A673 (cell line): ENCODE measurements at regions of chr1 and their contacts with region 1.

Region 1: GRCh38 chr1:36446271-36446670 is 4.0 kb downstream of the OSCP1 start:
- DNase-seq: peak; percentile 65
- H3K4me3 ChIP-seq: no peak overlapping the region
- H3K27ac ChIP-seq: no peak overlapping the region
- H3K4me1 ChIP-seq: peaks cover 12% of the 10 kb centered on the region
- H3K27me3 ChIP-seq: no peaks in the 10 kb centered on the region
- CTCF ChIP-seq: peak; percentile 70

Region 2: DNA sequence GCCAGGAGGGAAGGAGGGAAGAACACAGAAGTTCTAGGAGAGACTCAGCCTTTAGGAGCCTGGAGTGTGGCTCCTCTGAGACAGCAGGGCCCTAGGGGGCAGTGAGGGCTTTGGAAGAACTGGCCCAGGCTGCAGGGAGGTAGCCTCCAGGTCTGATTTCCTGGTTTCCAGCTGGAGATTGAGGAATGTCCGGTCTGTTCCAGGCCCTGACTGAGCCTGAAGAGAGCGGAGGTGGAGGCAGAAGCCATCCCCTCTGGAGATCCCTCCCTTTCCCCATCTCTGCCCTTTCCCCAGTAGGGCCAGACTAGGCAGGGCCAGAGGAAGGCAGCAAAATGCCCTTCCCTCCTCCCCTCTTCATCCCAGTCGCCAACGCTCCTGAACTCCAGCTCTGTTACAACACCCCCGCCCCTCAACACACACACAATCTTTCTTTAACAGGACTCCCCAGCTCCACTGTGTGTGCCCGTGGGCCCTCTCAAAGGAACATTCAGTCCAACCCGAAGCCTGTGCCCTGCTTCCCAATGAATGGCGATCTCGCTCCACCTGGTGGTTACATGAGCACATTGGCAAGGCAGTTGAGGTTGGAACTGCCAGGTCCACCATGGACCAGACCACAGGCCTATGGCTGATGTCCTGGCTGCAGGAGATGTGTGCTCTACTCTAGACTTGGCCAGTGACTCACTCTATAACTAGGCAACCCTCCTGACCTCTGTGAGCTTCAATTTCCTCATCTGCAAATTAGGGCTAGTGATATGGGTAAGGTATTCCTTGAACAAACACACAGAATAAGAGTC is 258.3 kb before region 1 on chr1:
- CTCF ChIA-PET with region 1: no interaction called
- POLR2A ChIA-PET with region 1: no interaction called
- intact Hi-C with region 1: no loop called
- DNase-seq: peak; percentile 91
- H3K4me3 ChIP-seq: no peak overlapping the region
- H3K27ac ChIP-seq: no peak overlapping the region
- H3K4me1 ChIP-seq: no peaks in the 10 kb centered on the region
- H3K27me3 ChIP-seq: no peaks in the 10 kb centered on the region
- CTCF ChIP-seq: peak; percentile 91

Region 3: DNA sequence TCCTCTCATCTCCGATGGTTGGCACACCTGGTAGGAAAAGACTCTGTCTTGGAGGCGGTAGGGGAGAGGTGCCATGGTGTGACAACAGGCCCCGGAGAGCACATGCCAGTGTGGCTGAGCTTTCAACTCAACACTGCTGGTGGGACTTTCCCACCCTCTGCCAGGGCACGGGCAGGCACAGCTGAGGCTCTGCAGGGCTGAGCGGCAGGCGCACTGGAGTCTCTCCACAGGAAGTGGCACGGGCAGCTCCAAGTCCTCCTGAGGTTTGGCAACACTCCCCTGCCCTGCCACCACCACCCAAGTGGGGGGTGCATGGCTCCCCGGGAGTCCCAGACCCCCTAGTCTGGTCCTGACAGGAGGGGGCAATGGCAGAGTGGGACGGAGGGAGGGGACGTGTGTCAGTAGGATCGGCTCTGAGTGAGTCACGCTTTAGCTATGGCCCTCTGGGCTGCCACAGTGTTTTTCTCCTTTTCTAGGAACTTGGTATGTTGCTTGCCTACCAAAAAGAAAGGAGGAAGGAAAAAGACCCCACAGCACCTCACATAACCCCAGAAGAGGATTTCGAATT is 95.5 kb before region 1 on chr1:
- CTCF ChIA-PET with region 1: no interaction called
- POLR2A ChIA-PET with region 1: no interaction called
- intact Hi-C with region 1: no loop called
- DNase-seq: peak; percentile 49
- H3K4me3 ChIP-seq: no peak overlapping the region
- H3K27ac ChIP-seq: peak overlapping the region; percentile 66
- H3K4me1 ChIP-seq: peaks cover 19% of the 10 kb centered on the region
- H3K27me3 ChIP-seq: no peaks in the 10 kb centered on the region
- CTCF ChIP-seq: no peak

Region 4: GRCh38 chr1:36369061-36369861 is 77.0 kb before region 1 on chr1:
- CTCF ChIA-PET with region 1: no interaction called
- POLR2A ChIA-PET with region 1: interaction called, 10 read pairs
- intact Hi-C with region 1: no loop called
- DNase-seq: peak; percentile 86
- H3K4me3 ChIP-seq: no peak overlapping the region
- H3K27ac ChIP-seq: peak overlapping the region; percentile 51
- H3K4me1 ChIP-seq: peaks cover 53% of the 10 kb centered on the region
- H3K27me3 ChIP-seq: no peaks in the 10 kb centered on the region
- CTCF ChIP-seq: peak; percentile 91

Region 5: DNA sequence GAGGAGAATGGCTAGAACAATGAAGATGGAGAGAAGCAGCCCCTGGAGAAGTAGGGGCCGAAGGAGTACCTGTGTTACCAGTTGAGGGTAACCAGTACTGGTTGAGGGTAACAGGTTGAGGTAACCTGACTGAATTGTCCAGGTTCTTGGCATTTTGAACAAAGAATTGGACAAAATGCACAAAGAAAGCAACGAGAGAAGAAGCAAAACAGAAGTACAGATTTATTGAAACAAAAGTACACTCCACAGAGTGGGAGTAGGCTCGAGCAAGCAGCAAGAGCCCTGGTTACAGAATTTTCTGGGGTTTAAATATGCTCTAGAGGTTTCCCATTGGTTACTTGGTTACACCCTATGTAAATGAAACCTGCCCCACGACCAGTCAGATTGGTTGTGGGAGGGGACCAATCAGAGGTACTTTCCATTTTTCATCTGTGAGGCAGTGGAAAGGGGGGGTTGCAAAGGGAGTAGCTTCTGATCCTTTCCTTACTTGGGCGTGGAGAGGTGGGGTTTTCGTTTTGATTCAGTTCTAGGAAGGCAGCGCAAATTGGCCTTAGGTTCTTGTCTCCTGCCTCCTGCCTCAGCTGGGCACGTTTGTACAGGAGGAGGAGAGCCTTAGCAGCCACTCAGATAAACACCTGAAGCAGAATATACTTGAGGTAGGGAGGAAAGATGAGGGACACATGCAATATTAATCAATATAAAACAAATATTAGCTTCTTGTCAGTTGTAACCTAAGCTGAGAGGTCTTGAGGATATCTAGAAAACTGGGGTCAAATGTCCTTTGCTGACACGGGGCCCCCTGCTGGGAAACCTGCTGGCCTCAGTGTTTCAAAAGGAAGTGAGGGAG is 34.4 kb before region 1 on chr1:
- CTCF ChIA-PET with region 1: no interaction called
- POLR2A ChIA-PET with region 1: interaction called, 15 read pairs
- intact Hi-C with region 1: no loop called
- DNase-seq: peak; percentile 66
- H3K4me3 ChIP-seq: no peak overlapping the region
- H3K27ac ChIP-seq: no peak overlapping the region
- H3K4me1 ChIP-seq: no peaks in the 10 kb centered on the region
- H3K27me3 ChIP-seq: no peaks in the 10 kb centered on the region
- CTCF ChIP-seq: no peak

Region 6: GRCh38 chr1:36542962-36543515 is 96.8 kb after region 1 on chr1:
- CTCF ChIA-PET with region 1: no interaction called
- POLR2A ChIA-PET with region 1: no interaction called
- intact Hi-C with region 1: no loop called
- DNase-seq: peak; percentile 42
- H3K4me3 ChIP-seq: no peak overlapping the region
- H3K27ac ChIP-seq: no peak overlapping the region
- H3K4me1 ChIP-seq: no peaks in the 10 kb centered on the region
- H3K27me3 ChIP-seq: peaks cover 12% of the 10 kb centered on the region
- CTCF ChIP-seq: peak; percentile 49